Right ventricle myocardium superior (tissue), 1 donor: ENCODE measurements at regions of chr1 and their contacts with region 1.

Region 1: GRCh38 chr1:26111530-26112406 is at the start of gene PDIK1L:
- DNase-seq: peak; percentile 96
- ATAC-seq: peak; percentile 95
- total RNA-seq, gene PDIK1L: 4.0 TPM

Region 2: GRCh38 chr1:26053718-26054560 is 57.8 kb before region 1 on chr1:
- intact Hi-C with region 1: no loop called
- DNase-seq: no peak
- ATAC-seq: no peak

Region 3: DNA sequence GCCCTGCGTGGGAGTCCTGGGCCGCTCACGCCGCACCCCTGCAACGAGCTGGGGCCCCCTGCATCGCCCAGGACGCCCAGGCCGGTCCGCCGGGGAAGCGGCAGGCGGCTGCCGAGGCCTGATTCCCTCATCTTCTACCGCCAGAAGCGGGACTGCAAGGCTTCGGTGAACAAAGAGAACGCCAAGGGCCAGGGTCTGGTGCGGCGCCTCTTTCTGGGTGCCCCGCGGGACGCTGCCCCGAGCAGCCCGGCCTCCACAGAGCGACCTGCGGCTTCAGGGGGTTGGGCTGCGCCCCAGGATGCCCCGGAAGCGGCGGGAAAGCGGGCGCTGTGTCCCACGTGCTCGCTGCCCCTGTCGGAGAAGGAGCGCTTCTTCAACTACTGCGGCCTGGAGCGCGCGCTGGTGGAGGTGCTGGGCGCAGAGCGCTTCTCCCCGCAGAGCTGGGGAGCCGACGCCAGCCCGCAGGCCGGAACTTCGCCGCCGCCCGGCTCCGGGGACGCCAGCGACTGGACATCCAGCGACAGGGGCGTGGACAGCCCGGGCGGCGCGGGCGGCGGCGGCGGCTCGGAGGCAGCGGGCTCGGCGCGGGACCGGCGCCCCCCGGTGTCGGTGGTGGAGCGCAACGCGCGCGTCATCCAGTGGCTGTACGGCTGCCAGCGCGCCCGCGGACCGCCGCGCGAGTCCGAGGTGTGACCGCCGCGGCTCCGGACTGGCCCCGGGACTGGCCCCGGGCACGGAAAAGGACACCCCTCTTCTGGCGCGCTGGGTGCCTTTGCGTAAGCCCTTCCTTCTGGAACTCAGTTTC is 49.8 kb after region 1 on chr1:
- intact Hi-C with region 1: loop called (anchors 5 kb)
- DNase-seq: peak; percentile 82
- ATAC-seq: peak; percentile 74

Region 4: GRCh38 chr1:26417111-26417759 is 305.5 kb after region 1 on chr1:
- intact Hi-C with region 1: loop called (anchors 5 kb)
- DNase-seq: peak; percentile 81
- ATAC-seq: peak; percentile 80